Dendritic cell treated with granulocyte-macrophage colony-stimulating factor and Interleukin-4, amounts not matched to agents 40 ng/mL and 50 ng/mL, for 4 days (primary cell): ENCODE measurements at regions of chr5 and their contacts with region 1.

Region 1: GRCh38 chr5:157718519-157718918 is 12.7 kb upstream of the THG1L start:
- H3K4me3 Mint-ChIP-seq: no peak overlapping the region
- H3K27ac Mint-ChIP-seq: no peak overlapping the region
- H3K4me1 Mint-ChIP-seq: peaks cover 5% of the 10 kb centered on the region
- H3K27me3 Mint-ChIP-seq: no peaks in the 10 kb centered on the region

Region 2: GRCh38 chr5:157328277-157328912 is 390.1 kb before region 1 on chr5:
- intact Hi-C with region 1: loop called (anchors 5 kb)
- H3K4me3 Mint-ChIP-seq: no peak overlapping the region
- H3K27ac Mint-ChIP-seq: no peak overlapping the region
- H3K4me1 Mint-ChIP-seq: peaks cover 6% of the 10 kb centered on the region
- H3K27me3 Mint-ChIP-seq: no peaks in the 10 kb centered on the region

Region 3: GRCh38 chr5:157342822-157343402 is 375.6 kb before region 1 on chr5:
- intact Hi-C with region 1: loop called (anchors 5 kb)
- H3K4me3 Mint-ChIP-seq: no peak overlapping the region
- H3K27ac Mint-ChIP-seq: no peak overlapping the region
- H3K4me1 Mint-ChIP-seq: no peaks in the 10 kb centered on the region
- H3K27me3 Mint-ChIP-seq: no peaks in the 10 kb centered on the region

Region 4: DNA sequence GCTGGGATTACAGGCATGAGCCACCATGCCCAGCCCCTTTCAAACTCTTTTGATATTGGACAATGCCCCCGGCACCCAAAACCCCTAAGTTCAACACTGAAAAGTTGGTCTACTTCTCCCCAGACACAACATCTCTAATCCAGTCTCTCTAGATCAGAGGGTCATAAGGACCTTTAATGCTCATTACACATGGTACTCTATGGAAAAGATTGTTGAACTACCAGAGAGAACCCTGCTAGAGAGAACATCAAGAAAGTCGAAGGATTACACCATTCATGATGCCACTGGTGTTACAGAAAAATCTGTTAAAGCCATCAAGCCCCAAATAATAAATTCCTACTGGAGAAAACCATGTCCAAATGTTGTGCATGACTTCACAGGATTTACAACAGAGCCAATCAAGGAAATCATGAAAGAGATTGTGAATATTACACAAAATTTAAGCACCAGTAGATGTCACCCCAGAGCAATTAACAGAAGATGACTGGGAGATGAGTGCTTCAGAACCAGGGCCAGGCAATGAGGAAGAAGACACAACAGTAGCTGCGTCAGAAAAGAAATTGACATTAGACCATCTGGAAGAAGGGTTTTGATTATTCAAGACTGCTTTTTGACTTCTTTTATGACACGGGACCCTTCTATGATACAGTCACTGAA is 286.8 kb before region 1 on chr5:
- intact Hi-C with region 1: loop called (anchors 1 kb)
- H3K4me3 Mint-ChIP-seq: no peak overlapping the region
- H3K27ac Mint-ChIP-seq: no peak overlapping the region
- H3K4me1 Mint-ChIP-seq: peaks cover 13% of the 10 kb centered on the region
- H3K27me3 Mint-ChIP-seq: peaks cover 11% of the 10 kb centered on the region

Region 5: DNA sequence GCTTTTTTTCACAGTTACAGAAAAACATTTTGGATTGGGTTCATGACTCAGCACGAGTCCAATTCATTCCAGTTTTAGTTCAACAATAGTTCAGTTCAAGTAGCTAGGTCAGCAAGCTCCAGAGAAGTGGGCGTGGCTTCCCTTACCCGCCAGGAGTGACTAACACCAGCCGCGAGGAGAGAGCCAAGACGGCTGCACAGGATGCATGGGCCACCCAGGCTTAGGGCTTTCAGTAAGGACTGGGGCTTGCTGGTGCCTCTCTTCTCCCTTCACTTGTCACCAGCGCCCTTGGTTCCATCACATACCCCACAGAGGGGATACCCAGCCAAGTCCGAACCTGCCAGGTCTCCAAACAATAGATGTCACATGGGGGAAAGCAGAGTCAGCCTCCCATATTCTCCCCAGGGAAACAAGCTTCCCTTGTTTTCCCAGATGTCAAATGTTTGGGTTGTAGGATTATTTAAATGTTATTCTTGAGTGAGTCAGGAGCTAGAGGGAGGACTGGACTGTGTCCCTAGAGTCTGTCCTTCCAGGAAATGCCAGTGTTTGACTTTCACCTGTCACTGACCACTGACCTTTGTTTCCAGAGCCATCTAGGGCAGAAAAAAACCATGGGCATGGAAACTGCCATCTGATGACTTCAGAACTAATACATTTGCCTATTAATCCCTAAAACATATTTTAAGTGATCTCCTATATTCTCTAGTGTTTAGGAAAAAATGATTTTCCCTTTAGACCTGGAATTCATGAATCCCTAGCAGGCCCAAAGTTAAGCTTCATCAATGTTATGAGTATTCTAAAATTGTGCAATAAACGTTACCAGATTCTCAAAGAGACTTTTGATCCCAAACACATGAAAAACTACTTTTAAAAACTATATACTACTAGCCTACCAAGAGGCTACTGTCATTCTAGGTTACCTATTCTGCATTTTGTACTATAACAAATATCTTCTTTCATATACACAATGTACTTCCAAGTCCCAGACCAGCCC is 206.6 kb before region 1 on chr5:
- intact Hi-C with region 1: loop called (anchors 10 kb)
- H3K4me3 Mint-ChIP-seq: no peak overlapping the region
- H3K27ac Mint-ChIP-seq: peak overlapping the region; percentile 64
- H3K4me1 Mint-ChIP-seq: peaks cover 22% of the 10 kb centered on the region
- H3K27me3 Mint-ChIP-seq: no peaks in the 10 kb centered on the region

Region 6: DNA sequence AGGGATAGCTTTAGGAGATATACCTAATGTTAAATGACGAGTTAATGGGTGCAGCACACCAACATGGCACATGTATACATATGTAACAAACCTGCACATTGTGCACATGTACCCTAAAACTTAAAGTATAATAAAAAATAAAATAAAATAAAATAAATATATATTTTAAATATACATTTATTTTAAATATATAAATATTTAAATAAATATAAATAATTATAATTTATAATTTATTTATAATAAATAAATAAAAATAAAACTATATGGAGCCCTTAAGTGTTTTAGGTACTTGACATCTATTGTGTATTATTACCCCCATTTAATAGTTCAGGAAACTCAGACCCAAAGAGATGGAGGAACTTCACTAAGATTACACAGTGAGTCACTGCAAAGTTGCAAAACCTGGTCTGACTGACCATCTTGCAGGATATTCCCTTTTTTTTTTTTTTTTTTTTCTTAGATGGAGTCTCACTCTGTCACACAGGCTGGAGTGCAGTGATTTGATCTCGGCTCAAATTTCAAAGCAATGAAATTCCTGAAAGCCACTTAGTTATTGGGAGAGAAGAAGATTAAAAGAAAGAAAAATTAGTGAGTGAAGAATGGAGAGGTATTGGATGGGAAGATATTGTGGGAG is 52.9 kb before region 1 on chr5:
- intact Hi-C with region 1: loop called (anchors 1 kb)
- H3K4me3 Mint-ChIP-seq: no peak overlapping the region
- H3K27ac Mint-ChIP-seq: no peak overlapping the region
- H3K4me1 Mint-ChIP-seq: peaks cover 21% of the 10 kb centered on the region
- H3K27me3 Mint-ChIP-seq: peaks cover 31% of the 10 kb centered on the region

Region 7: DNA sequence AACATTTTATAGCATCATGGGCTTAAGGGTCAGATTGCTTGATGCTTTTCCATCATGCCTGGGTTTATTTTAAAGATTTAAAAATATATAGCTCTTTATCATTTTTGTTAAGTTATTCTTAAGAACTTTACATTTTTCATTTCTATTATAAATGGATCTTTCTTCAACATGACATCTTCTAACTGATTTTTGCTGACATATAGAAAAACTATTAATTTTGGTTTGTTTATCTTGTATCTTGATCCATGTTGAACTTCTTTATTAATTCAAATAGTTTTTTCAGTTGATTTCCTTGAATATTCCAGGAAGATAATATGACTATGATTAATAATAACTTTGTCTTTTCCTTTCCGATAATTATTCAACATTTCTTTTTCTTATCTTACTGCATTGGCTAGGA is 378.3 kb after region 1 on chr5:
- intact Hi-C with region 1: no loop called
- H3K4me3 Mint-ChIP-seq: no peak overlapping the region
- H3K27ac Mint-ChIP-seq: no peak overlapping the region
- H3K4me1 Mint-ChIP-seq: no peaks in the 10 kb centered on the region
- H3K27me3 Mint-ChIP-seq: no peaks in the 10 kb centered on the region